ENCODE measurements at regions of chr14 and their contacts with region 1.

Region 1: DNA sequence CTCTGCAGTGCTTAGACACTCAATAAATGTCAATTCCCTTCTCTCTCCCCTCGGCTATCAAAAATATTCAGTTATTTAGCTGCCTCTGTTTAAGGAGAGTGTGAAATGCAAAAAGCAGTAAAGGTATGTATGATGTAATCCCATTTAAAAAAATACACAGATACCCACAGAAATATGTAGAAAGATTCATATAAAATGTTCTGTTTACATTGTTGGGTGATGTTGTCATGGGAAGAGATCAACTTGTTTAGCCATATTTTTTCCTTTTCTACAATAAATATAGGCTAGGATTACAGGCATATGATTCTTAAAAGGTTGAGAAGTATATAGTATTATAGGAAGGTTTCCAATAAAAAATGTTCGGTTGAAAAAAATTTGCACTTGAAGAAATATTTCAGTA is 7.8 kb downstream of the PPP2R3C start:
- DNase-seq: no peak
- ATAC-seq: no peak
- H3K4me3 ChIP-seq: no peak overlapping the region
- H3K27ac ChIP-seq: no peak overlapping the region
- H3K4me1 ChIP-seq: no peaks in the 10 kb centered on the region
- H3K27me3 ChIP-seq: no peaks in the 10 kb centered on the region
- CTCF ChIP-seq: no peak
- POLR2A ChIP-seq: no peak
- RAD21 ChIP-seq: no peak

Region 2: DNA sequence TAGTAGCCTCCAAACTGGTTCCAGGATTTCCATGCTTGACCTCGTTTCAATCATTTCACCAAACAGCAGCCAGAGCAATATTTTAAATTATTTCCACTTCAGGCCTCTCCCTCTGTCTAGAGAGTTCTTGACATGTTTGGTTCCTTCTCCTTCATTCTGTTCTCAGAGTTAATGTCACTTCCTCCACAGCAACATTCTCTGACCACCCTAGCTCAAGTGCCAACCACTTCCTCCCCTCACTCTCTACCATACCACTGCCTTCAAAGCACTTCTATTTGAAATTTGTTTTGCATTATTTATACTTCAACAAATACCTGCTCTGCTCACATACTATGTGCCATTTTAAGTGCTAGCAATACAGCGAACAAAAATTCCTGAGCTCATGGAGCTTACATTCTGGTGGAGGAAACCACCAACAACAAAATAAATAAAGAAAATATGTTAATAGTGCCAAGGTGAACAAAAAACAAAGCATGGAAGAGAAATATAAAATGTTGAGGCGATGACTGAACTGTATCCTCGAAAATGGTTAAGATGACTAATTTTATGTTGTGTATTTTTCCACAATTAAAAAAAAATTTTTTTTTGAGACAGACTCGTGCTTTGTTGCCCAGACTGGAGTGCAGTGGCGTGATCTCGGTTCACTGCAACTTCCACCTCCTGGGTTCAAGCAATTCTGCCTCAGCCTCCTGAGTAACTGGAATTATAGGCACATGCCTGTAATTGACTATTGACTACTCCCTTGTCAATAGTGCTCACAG is 256.2 kb before region 1 on chr14:
- CTCF ChIA-PET with region 1: no interaction called
- POLR2A ChIA-PET with region 1: no interaction called
- RAD21 ChIA-PET with region 1: no interaction called
- intact Hi-C with region 1: no loop called
- DNase-seq: no peak
- ATAC-seq: no peak
- H3K4me3 ChIP-seq: no peak overlapping the region
- H3K27ac ChIP-seq: no peak overlapping the region
- H3K4me1 ChIP-seq: no peaks in the 10 kb centered on the region
- H3K27me3 ChIP-seq: no peaks in the 10 kb centered on the region
- CTCF ChIP-seq: no peak
- POLR2A ChIP-seq: no peak
- RAD21 ChIP-seq: no peak

Region 3: GRCh38 chr14:35068238-35069012 is 45.6 kb before region 1 on chr14:
- CTCF ChIA-PET with region 1: no interaction called
- POLR2A ChIA-PET with region 1: no interaction called
- RAD21 ChIA-PET with region 1: no interaction called
- intact Hi-C with region 1: loop called (anchors 5 kb)
- DNase-seq: no peak
- ATAC-seq: no peak
- H3K4me3 ChIP-seq: no peak overlapping the region
- H3K27ac ChIP-seq: no peak overlapping the region
- H3K4me1 ChIP-seq: no peaks in the 10 kb centered on the region
- H3K27me3 ChIP-seq: no peaks in the 10 kb centered on the region
- CTCF ChIP-seq: no peak
- POLR2A ChIP-seq: no peak
- RAD21 ChIP-seq: no peak

Region 4: DNA sequence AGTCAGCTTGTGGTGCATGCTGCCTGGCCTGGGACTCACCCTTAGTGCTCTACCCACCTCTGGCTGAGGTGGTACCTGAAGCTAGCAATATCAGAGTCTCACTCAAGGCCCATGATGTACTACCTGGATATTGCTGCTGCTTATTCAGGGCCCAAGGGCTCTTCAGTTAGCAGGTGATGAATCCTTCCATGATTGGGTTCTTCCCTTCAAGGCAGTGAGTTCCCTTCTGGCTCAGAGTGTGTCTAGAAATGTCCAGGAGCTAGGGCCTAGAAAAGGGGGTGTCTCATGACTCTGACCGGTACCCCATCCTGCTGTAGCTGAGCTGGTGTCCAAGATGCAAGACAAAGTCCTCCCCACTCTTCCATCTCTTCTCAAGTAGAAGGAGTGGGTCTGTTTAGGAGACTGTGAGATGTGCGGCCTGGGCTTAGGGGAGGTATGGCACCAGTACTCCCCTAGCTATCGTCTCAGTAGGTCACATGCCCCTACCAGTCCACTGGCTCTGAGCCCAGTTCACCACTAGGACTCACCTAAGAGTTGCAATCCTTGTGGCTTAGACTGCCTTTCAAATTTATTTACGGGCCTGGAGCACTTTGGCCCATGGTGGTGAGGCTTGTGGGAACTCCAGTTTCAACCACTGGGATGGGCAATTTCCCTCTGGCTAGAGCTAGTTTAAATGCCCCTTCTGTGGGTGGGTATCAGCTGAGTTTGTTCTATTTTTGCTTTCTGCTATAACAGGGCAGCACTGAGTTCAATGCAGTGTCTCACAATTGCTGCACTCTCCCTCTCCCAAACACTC is 20.5 kb after region 1 on chr14:
- CTCF ChIA-PET with region 1: no interaction called
- POLR2A ChIA-PET with region 1: no interaction called
- RAD21 ChIA-PET with region 1: no interaction called
- intact Hi-C with region 1: no loop called
- DNase-seq: no peak
- ATAC-seq: no peak
- H3K4me3 ChIP-seq: no peak overlapping the region
- H3K27ac ChIP-seq: no peak overlapping the region
- H3K4me1 ChIP-seq: no peaks in the 10 kb centered on the region
- H3K27me3 ChIP-seq: no peaks in the 10 kb centered on the region
- CTCF ChIP-seq: no peak
- POLR2A ChIP-seq: no peak
- RAD21 ChIP-seq: no peak

Region 5: DNA sequence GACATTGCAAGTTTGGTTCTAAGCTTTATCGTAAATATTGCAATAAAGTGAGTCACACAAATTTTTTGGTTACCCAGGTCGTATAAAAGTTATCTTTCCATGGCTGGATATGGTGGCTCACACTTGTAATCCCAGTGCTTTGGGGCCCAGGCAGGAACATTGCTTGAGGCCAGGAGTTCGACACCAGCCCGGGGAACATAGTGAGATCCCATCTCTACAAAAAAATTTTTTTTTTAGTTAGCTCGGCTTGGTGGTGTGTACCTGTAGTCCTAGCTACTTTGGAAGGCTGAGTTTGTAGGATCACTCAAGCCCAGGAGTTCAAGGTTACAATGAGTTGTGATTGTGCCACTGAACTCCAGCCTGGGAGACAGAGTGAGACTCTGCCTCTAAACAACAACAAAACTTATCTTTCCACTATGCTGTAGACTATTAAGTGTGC is 32.7 kb after region 1 on chr14:
- CTCF ChIA-PET with region 1: no interaction called
- POLR2A ChIA-PET with region 1: no interaction called
- RAD21 ChIA-PET with region 1: no interaction called
- intact Hi-C with region 1: no loop called
- DNase-seq: no peak
- ATAC-seq: no peak
- H3K4me3 ChIP-seq: no peak overlapping the region
- H3K27ac ChIP-seq: no peak overlapping the region
- H3K4me1 ChIP-seq: no peaks in the 10 kb centered on the region
- H3K27me3 ChIP-seq: no peaks in the 10 kb centered on the region
- CTCF ChIP-seq: no peak
- POLR2A ChIP-seq: no peak
- RAD21 ChIP-seq: no peak